ENCODE measurements at regions of chr4 and their contacts with region 1.

Region 1: GRCh38 chr4:41160012-41160789 is 54.1 kb downstream of the APBB2 start:
- DNase-seq: peak in 1 of 2 experiments; percentile 50
- H3K4me3 ChIP-seq: no peak overlapping the region
- H3K4me3 Mint-ChIP-seq: no peak overlapping the region
- H3K27ac Mint-ChIP-seq: peak overlapping the region; percentile 70
- H3K4me1 ChIP-seq: peaks cover 76% of the 10 kb centered on the region
- H3K4me1 Mint-ChIP-seq: peaks cover 62% of the 10 kb centered on the region
- H3K27me3 ChIP-seq: no peaks in the 10 kb centered on the region
- H3K27me3 Mint-ChIP-seq: no peaks in the 10 kb centered on the region
- CTCF ChIP-seq: no peak

Region 2: GRCh38 chr4:40719008-40719623 is 441.1 kb before region 1 on chr4:
- CTCF ChIA-PET with region 1: no interaction called
- POLR2A ChIA-PET with region 1: no interaction called
- intact Hi-C with region 1: no loop called
- DNase-seq: peak; percentile 41 to 54
- H3K4me3 ChIP-seq: no peak overlapping the region
- H3K4me3 Mint-ChIP-seq: no peak overlapping the region
- H3K27ac Mint-ChIP-seq: no peak overlapping the region
- H3K4me1 ChIP-seq: peaks cover 23% of the 10 kb centered on the region
- H3K4me1 Mint-ChIP-seq: no peaks in the 10 kb centered on the region
- H3K27me3 ChIP-seq: no peaks in the 10 kb centered on the region
- H3K27me3 Mint-ChIP-seq: no peaks in the 10 kb centered on the region
- CTCF ChIP-seq: peak; percentile 54 to 69

Region 3: GRCh38 chr4:41044165-41044564 is 116.0 kb before region 1 on chr4:
- CTCF ChIA-PET with region 1: no interaction called
- POLR2A ChIA-PET with region 1: no interaction called
- intact Hi-C with region 1: no loop called
- DNase-seq: no peak
- H3K4me3 ChIP-seq: no peak overlapping the region
- H3K4me3 Mint-ChIP-seq: no peak overlapping the region
- H3K27ac Mint-ChIP-seq: no peak overlapping the region
- H3K4me1 ChIP-seq: peaks cover 4% of the 10 kb centered on the region; the same call in 1 of the 2 replicates
- H3K4me1 Mint-ChIP-seq: no peaks in the 10 kb centered on the region
- H3K27me3 ChIP-seq: no peaks in the 10 kb centered on the region
- H3K27me3 Mint-ChIP-seq: no peaks in the 10 kb centered on the region
- CTCF ChIP-seq: no peak

Region 4: GRCh38 chr4:41177016-41177415 is 16.8 kb after region 1 on chr4:
- CTCF ChIA-PET with region 1: no interaction called
- POLR2A ChIA-PET with region 1: no interaction called
- intact Hi-C with region 1: loop called (anchors 2 kb)
- DNase-seq: peak in 1 of 2 experiments; percentile 17
- H3K4me3 ChIP-seq: no peak overlapping the region
- H3K4me3 Mint-ChIP-seq: no peak overlapping the region
- H3K27ac Mint-ChIP-seq: peak overlapping the region; percentile 50
- H3K4me1 ChIP-seq: peaks cover 80% of the 10 kb centered on the region
- H3K4me1 Mint-ChIP-seq: peaks cover 40% of the 10 kb centered on the region
- H3K27me3 ChIP-seq: no peaks in the 10 kb centered on the region
- H3K27me3 Mint-ChIP-seq: no peaks in the 10 kb centered on the region
- CTCF ChIP-seq: no peak